OCI-LY7 (cell line): ENCODE measurements at regions of chr6 and their contacts with region 1.

Region 1: GRCh38 chr6:167479901-167480648 is 155.2 kb downstream of the TTLL2 start:
- DNase-seq: no peak
- H3K4me3 ChIP-seq: no peak overlapping the region
- H3K27ac ChIP-seq: no peak overlapping the region
- H3K4me1 ChIP-seq: no peaks in the 10 kb centered on the region
- CTCF ChIP-seq: no peak

Region 2: GRCh38 chr6:167898673-167899311 is 418.7 kb after region 1 on chr6:
- CTCF ChIA-PET with region 1: no interaction called
- POLR2A ChIA-PET with region 1: no interaction called
- intact Hi-C with region 1: loop called (anchors 5 kb)
- DNase-seq: peak; percentile 41
- H3K4me3 ChIP-seq: no peak overlapping the region
- H3K27ac ChIP-seq: no peak overlapping the region
- H3K4me1 ChIP-seq: no peaks in the 10 kb centered on the region
- CTCF ChIP-seq: peak; percentile 89